Transverse colon (tissue), 4 donors: ENCODE measurements at regions of chr11 and their contacts with region 1.

Region 1: GRCh38 chr11:93504110-93505095 is 38.8 kb downstream of the SMCO4 start:
- DNase-seq: no peak
- H3K4me3 ChIP-seq: no peak overlapping the region
- H3K27ac ChIP-seq: no peak overlapping the region
- H3K4me1 ChIP-seq: no peaks in the 10 kb centered on the region
- H3K27me3 ChIP-seq: no peaks in the 10 kb centered on the region
- CTCF ChIP-seq: no peak
- EP300 ChIP-seq: no peak
- POLR2A ChIP-seq: no peak

Region 2: GRCh38 chr11:93549976-93550375 is 45.6 kb after region 1 on chr11:
- in situ Hi-C with region 1: no loop called
- intact Hi-C with region 1: loop called (anchors 2 kb)
- DNase-seq: no peak
- H3K4me3 ChIP-seq: no peak overlapping the region
- H3K27ac ChIP-seq: no peak overlapping the region
- H3K4me1 ChIP-seq: no peaks in the 10 kb centered on the region
- H3K27me3 ChIP-seq: no peaks in the 10 kb centered on the region
- CTCF ChIP-seq: no peak
- EP300 ChIP-seq: no peak
- POLR2A ChIP-seq: no peak